ENCODE measurements at regions of chr19 and their contacts with region 1.

Region 1: GRCh38 chr19:7562646-7563393 is 27.3 kb downstream of the PNPLA6 start:
- DNase-seq: peak; percentile 11
- CTCF ChIP-seq: no peak

Region 2: DNA sequence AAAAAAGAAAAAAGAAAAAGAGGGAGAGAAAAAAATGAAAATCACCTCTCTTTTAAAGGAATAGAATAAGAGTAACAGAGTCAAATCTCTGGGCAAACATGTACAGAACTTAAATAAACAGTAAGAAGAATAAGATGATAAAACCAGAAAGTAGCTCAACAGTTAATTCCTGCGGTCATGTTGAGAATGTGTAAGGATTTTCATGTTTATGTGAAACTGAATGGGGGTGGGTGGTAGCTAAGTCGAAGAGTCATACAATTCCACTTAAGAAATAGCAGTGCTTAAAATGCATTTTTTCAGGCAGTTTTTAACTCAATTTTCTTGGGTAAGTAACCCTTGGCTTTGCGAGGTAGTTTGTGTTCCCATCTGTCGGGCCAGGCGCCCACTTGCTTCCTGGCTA is 134.9 kb before region 1 on chr19:
- CTCF ChIA-PET with region 1: no interaction called
- POLR2A ChIA-PET with region 1: no interaction called
- DNase-seq: no peak
- CTCF ChIP-seq: no peak

Region 3: DNA sequence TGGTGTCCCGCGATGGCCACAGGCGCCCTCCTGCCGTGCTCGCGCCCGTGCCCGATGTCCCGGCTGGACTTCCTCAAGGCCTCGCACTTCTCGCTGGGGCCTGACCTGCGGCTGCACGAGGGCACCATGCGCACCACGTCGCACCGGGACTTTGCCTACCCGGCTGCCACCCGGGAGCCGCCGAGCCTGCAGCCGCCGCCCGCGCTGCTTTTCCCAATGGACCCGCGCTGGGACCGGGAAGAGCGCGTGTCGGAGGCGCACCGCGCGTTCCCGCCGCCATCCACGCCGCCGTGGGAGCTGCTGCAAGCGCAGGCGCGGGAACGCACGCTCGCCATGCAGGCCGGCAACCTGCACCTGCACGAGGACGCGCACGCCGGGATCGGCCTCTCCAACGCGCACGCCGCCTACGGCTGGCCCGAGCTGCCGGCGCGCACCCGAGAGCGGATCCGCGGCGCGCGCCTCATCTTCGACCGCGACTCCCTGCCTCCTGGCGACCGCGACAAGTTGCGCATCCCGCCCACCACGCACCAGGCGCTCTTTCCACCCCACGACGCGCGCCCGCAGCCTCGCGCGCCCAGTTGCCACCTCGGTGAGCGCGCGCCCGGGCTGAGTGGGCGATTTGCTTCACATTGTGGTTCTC is 61.9 kb before region 1 on chr19:
- CTCF ChIA-PET with region 1: no interaction called
- POLR2A ChIA-PET with region 1: no interaction called
- DNase-seq: peak; percentile 41
- CTCF ChIP-seq: no peak

Region 4: DNA sequence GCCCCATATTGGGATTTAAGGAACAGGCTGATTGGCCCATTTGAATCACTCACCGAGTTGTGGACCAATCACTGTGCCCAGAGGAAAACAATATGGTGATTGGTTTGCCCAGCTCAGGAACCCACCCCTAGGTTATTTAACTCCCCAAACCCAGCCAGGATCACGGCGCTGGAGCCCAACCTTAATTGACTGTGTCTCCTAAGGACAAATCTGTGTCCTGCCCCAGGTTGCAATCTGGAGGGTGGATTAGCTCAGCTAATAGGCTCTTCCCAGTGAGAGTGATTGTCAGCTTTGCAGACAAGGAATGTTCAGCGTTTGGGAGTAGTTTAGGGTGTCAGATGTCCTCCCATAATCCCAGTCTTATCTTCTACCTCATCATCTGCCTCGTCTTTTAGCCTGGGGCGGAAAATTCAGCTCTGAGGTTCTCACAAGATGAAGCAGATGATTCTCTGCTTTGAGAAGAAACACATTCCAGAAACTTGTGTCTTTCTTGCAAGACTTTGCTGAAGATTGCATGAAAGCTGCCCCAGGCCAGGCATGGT is 50.3 kb before region 1 on chr19:
- CTCF ChIA-PET with region 1: interaction called, 10 read pairs
- POLR2A ChIA-PET with region 1: no interaction called
- DNase-seq: no peak
- CTCF ChIP-seq: no peak

Region 5: DNA sequence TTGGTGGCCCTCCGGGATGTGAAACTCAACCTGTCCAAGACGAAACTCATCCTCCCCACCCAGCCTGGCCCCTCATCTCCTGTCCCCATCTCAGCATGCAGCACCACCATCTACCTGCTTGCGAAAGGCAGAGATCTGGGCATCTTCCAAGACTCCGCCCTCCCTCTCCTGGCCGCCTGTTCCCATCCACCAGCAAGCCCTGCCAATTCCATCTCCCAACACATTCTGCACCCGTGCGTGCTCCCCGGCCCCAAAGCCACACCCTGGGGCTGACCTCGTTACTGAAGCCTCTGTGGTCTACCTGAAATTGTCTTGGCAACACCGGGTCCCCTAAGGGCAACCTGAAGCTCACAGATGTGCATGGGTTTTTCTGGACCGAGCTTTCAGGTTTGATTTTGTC is 19.6 kb after region 1 on chr19:
- CTCF ChIA-PET with region 1: interaction called, 29 read pairs
- POLR2A ChIA-PET with region 1: no interaction called
- DNase-seq: no peak
- CTCF ChIP-seq: no peak

Region 6: DNA sequence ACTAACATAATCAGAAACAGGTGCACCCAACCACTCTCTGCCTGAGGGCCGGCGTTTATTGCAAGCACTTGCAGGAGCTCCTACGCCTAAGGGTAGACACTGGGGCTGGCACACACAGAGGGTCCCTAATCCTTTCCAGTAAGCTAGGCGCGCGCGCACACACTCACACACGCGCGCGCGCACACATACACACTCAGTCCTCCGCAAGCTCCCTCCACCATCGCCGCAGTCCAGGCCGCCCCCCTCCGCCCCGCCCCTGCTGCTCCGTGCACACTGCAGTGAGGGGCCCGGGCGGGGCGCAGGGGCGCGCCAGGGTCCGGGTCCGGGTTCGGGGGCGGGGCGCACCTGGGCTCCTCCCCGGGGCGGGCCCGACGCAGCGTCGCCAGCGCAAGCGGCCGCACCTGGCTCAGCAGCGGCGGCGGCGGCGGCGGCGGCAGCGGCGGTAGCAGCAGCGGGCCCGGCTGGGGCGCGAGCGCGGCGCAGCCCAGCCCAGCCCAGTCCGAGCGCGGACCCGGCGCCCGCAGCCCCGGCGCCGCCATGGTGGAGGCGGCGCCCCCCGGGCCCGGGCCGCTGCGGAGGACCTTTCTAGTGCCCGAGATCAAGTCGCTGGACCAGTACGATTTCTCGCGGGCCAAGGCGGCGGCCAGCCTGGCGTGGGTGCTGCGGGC is 32.8 kb after region 1 on chr19 and contains the start of gene CAMSAP3:
- CTCF ChIA-PET with region 1: interaction called, 13 read pairs
- POLR2A ChIA-PET with region 1: no interaction called
- DNase-seq: peak; percentile 79
- CTCF ChIP-seq: no peak

Region 7: GRCh38 chr19:7806876-7807275 is 244.1 kb after region 1 on chr19:
- CTCF ChIA-PET with region 1: interaction called, 49 read pairs
- POLR2A ChIA-PET with region 1: no interaction called
- DNase-seq: no peak
- CTCF ChIP-seq: no peak

Measured in GM10248 (cell line).